CD4-positive, alpha-beta memory T cell (primary cell): ENCODE measurements at regions of chr6 and their contacts with region 1.

Region 1: DNA sequence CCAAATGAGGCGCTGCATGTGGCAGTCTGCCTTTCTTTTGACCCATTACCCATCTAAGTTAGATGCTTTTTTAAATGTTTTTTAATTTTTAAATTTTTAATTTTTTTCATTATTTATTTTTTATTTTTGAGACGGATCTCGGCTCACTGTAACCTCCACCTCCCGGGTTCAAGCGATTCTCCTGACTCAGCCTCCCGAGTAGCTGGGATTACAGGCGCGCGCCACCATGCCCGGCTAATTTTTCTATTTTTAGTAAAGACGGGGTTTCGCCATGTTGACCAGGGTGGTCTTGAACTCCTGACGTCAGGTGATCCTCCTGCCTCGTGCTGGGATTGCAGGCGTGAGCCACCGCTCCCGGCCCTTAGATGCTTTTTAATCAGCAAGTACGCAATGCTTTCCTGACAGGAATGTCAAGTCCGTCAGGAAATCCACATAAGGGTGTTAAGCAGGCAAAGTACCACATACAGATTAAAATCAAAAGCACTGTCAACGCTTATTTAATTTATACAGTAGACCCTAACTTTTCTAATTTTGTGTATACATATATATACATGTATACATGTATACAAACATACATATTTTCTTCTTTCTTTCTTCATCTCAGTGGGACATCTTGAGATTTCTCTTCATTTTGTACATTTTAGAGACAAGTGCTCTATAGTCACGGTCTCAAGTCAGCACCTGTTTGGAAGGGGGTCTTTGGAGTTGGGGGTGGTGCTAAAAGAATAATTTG is 995 bp upstream of the GSTA4 start:
- DNase-seq: peak in 4 of 5 donors; percentile 36 to 42 (median 39)
- H3K4me3 ChIP-seq: peak overlapping the region; percentile 4 to 59
- H3K4me3 Mint-ChIP-seq: peak overlapping the region; percentile 92 to 99 (median 94)
- H3K27ac ChIP-seq: no peak overlapping the region
- H3K27ac Mint-ChIP-seq: peak overlapping the region; percentile 95 to 100 (median 100)
- H3K4me1 ChIP-seq: peaks cover 22% of the 10 kb centered on the region
- H3K4me1 Mint-ChIP-seq: peaks cover 9 to 29% (median 20%) of the 10 kb centered on the region in 4 donors
- H3K27me3 ChIP-seq: no peaks in the 10 kb centered on the region
- H3K27me3 Mint-ChIP-seq: peaks cover 4 to 8% of the 10 kb centered on the region in 2 donors

Region 2: GRCh38 chr6:52399511-52400312 is 596.4 kb before region 1 on chr6:
- CTCF ChIA-PET with region 1: no interaction called
- POLR2A ChIA-PET with region 1: no interaction called
- intact Hi-C with region 1: loop called (anchors 10 kb)
- DNase-seq: peak; percentile 36 to 53 (median 47)
- H3K4me3 ChIP-seq: no peak overlapping the region
- H3K4me3 Mint-ChIP-seq: peak overlapping the region in 7 of 8 donors; percentile 32 to 82 (median 63)
- H3K27ac ChIP-seq: peak overlapping the region; percentile 67
- H3K27ac Mint-ChIP-seq: peak overlapping the region; percentile 95 to 99 (median 96)
- H3K4me1 ChIP-seq: peaks cover 68% of the 10 kb centered on the region
- H3K4me1 Mint-ChIP-seq: peaks cover 51 to 84% (median 60%) of the 10 kb centered on the region in 4 donors
- H3K27me3 ChIP-seq: no peaks in the 10 kb centered on the region
- H3K27me3 Mint-ChIP-seq: no peaks in the 10 kb centered on the region

Region 3: DNA sequence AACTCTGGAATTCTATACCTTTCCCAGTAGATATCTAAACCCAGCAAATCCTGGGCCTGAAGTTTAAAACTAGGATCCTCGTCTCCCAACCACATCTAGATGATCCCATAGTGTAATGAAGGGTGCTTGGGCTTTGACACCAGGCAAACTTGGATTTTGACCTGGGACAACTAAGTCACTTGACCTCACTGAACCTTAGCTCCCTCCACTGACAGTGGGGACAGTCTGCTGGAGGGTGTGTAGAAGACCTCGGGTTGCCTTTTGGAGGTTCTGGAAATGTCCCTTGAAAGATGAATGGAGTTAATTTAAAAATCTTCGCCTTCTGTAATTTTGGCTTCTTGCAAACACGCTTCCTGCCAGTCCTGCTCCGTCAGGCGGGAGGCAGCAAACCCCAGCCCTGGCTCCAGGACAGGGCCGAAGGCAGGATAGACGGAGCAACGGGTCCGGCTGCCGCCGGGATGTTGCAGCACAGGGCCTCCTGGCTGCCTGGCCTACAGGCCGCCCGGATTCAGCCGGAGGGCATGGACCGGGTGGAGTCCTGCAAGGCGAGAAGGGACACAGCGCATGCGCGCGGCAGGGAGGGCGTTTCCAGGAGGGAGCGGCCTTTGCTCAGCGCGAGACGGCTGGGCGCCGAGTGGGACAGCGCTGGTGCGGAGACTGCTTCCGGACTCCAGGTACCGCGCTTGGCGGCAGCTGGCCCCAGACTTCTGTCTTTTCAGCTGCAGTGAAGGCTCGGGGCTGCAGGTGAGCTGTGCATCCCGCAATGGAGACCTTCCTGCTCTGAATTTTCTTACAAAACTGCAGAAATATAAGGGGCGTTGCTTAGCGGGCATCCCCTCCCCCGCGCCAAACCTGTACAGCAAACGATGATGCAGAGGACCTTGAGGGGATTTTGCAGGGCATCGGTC is 325.3 kb before region 1 on chr6 and contains the start of gene TMEM14A:
- CTCF ChIA-PET with region 1: no interaction called
- POLR2A ChIA-PET with region 1: no interaction called
- intact Hi-C with region 1: loop called (anchors 5 kb)
- DNase-seq: peak; percentile 89 to 90 (median 89)
- H3K4me3 ChIP-seq: peak within 1 kb of the TSS; percentile 37 to 84
- H3K4me3 Mint-ChIP-seq: peak within 1 kb of the TSS; percentile 89 to 95 (median 92)
- H3K27ac ChIP-seq: peak within 1 kb of the TSS; percentile 50
- H3K27ac Mint-ChIP-seq: peak within 1 kb of the TSS; percentile 2 to 97 (median 89)
- H3K4me1 ChIP-seq: peaks cover 25% of the 10 kb centered on the region
- H3K4me1 Mint-ChIP-seq: peaks cover 23 to 32% (median 27%) of the 10 kb centered on the region in 4 donors
- H3K27me3 ChIP-seq: no peaks in the 10 kb centered on the region
- H3K27me3 Mint-ChIP-seq: peaks cover 0 to 2% of the 10 kb centered on the region in 2 donors
- total RNA-seq, gene TMEM14A: 9.5 to 10.0 TPM

Region 4: GRCh38 chr6:52953911-52954839 is 41.9 kb before region 1 on chr6:
- CTCF ChIA-PET with region 1: no interaction called
- POLR2A ChIA-PET with region 1: no interaction called
- intact Hi-C with region 1: no loop called
- DNase-seq: no peak
- H3K4me3 ChIP-seq: no peak overlapping the region
- H3K4me3 Mint-ChIP-seq: no peak overlapping the region
- H3K27ac ChIP-seq: no peak overlapping the region
- H3K27ac Mint-ChIP-seq: no peak overlapping the region
- H3K4me1 ChIP-seq: no peaks in the 10 kb centered on the region
- H3K4me1 Mint-ChIP-seq: peaks cover 0 to 3% (median 0%) of the 10 kb centered on the region in 4 donors
- H3K27me3 ChIP-seq: no peaks in the 10 kb centered on the region
- H3K27me3 Mint-ChIP-seq: peaks cover 1 to 2% of the 10 kb centered on the region in 2 donors

Region 5: DNA sequence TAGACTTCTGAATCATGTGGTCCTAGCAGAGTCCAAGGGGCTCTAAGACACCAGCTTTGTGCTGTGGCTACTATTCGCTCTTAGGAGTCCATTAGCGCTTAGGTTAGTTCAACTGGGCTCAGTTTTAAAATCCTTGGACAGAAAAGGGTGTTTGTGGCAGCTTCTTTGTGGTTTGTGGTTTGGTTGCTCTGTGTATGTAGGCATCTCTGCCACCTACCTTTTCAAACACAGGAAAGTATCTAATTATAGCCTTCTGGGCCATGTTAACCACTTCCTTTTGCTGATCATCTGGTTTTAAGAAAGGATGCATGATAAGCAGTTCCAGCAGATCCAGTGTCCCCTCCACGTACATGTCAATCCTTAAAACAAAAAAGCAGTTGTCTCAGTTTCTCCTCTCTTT is 11.8 kb before region 1 on chr6:
- CTCF ChIA-PET with region 1: interaction called, 49 read pairs
- POLR2A ChIA-PET with region 1: interaction called, 14 read pairs
- intact Hi-C with region 1: loop called (anchors 1 kb)
- DNase-seq: peak; percentile 70 to 81 (median 76)
- H3K4me3 ChIP-seq: peak overlapping the region; percentile 9 to 11
- H3K4me3 Mint-ChIP-seq: peak overlapping the region; percentile 18 to 85 (median 78)
- H3K27ac ChIP-seq: no peak overlapping the region
- H3K27ac Mint-ChIP-seq: peak overlapping the region in 4 of 7 donors; percentile 37 to 86 (median 59)
- H3K4me1 ChIP-seq: peaks cover 31% of the 10 kb centered on the region
- H3K4me1 Mint-ChIP-seq: peaks cover 31 to 40% (median 34%) of the 10 kb centered on the region in 4 donors
- H3K27me3 ChIP-seq: no peaks in the 10 kb centered on the region
- H3K27me3 Mint-ChIP-seq: peaks cover 5 to 20% of the 10 kb centered on the region in 2 donors

Region 6: DNA sequence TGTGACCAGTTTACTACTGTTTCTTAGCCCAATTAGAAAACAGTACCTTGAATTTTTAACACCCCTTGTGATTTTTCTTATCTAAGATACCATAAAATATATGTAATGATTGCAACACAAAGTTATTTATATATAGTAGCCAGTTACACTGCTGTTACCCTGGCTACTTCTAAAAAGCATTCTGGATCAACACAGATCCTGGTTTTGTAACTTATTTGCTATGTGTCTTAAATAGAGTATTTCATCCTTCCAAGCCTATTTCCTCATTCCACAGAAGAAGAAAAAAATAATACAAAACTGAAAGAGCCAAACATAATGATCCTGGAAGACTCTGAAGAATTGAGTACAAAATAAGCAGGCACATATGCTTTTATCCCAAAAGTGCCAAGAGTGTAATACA is 18.0 kb after region 1 on chr6:
- CTCF ChIA-PET with region 1: no interaction called
- POLR2A ChIA-PET with region 1: no interaction called
- intact Hi-C with region 1: no loop called
- DNase-seq: no peak
- H3K4me3 ChIP-seq: no peak overlapping the region
- H3K4me3 Mint-ChIP-seq: no peak overlapping the region
- H3K27ac ChIP-seq: no peak overlapping the region
- H3K27ac Mint-ChIP-seq: no peak overlapping the region
- H3K4me1 ChIP-seq: no peaks in the 10 kb centered on the region
- H3K4me1 Mint-ChIP-seq: no peaks in the 10 kb centered on the region
- H3K27me3 ChIP-seq: no peaks in the 10 kb centered on the region
- H3K27me3 Mint-ChIP-seq: no peaks in the 10 kb centered on the region

Region 7: GRCh38 chr6:53064726-53065215 is 68.7 kb after region 1 on chr6:
- CTCF ChIA-PET with region 1: interaction called, 14 read pairs
- POLR2A ChIA-PET with region 1: interaction called, 23 read pairs
- intact Hi-C with region 1: loop called (anchors 1 kb)
- DNase-seq: peak; percentile 93 to 99 (median 96)
- H3K4me3 ChIP-seq: peak overlapping the region; percentile 74 to 99
- H3K4me3 Mint-ChIP-seq: peak overlapping the region; percentile 98 to 100 (median 99)
- H3K27ac ChIP-seq: peak overlapping the region; percentile 63
- H3K27ac Mint-ChIP-seq: peak overlapping the region; percentile 86 to 99 (median 99)
- H3K4me1 ChIP-seq: peaks cover 52% of the 10 kb centered on the region
- H3K4me1 Mint-ChIP-seq: peaks cover 34 to 73% (median 54%) of the 10 kb centered on the region in 4 donors
- H3K27me3 ChIP-seq: no peaks in the 10 kb centered on the region
- H3K27me3 Mint-ChIP-seq: no peaks in the 10 kb centered on the region

Region 8: GRCh38 chr6:53651764-53652401 is 655.8 kb after region 1 on chr6:
- CTCF ChIA-PET with region 1: no interaction called
- POLR2A ChIA-PET with region 1: no interaction called
- intact Hi-C with region 1: loop called (anchors 10 kb)
- DNase-seq: peak; percentile 79 to 83 (median 82)
- H3K4me3 ChIP-seq: peak overlapping the region; percentile 64 to 89
- H3K4me3 Mint-ChIP-seq: peak overlapping the region; percentile 87 to 96 (median 93)
- H3K27ac ChIP-seq: peak overlapping the region; percentile 50
- H3K27ac Mint-ChIP-seq: peak overlapping the region; percentile 79 to 95 (median 94)
- H3K4me1 ChIP-seq: peaks cover 22% of the 10 kb centered on the region
- H3K4me1 Mint-ChIP-seq: peaks cover 16 to 47% (median 27%) of the 10 kb centered on the region in 4 donors
- H3K27me3 ChIP-seq: no peaks in the 10 kb centered on the region
- H3K27me3 Mint-ChIP-seq: no peaks in the 10 kb centered on the region